ENCODE measurements at regions of chr5 and their contacts with region 1.

Region 1: DNA sequence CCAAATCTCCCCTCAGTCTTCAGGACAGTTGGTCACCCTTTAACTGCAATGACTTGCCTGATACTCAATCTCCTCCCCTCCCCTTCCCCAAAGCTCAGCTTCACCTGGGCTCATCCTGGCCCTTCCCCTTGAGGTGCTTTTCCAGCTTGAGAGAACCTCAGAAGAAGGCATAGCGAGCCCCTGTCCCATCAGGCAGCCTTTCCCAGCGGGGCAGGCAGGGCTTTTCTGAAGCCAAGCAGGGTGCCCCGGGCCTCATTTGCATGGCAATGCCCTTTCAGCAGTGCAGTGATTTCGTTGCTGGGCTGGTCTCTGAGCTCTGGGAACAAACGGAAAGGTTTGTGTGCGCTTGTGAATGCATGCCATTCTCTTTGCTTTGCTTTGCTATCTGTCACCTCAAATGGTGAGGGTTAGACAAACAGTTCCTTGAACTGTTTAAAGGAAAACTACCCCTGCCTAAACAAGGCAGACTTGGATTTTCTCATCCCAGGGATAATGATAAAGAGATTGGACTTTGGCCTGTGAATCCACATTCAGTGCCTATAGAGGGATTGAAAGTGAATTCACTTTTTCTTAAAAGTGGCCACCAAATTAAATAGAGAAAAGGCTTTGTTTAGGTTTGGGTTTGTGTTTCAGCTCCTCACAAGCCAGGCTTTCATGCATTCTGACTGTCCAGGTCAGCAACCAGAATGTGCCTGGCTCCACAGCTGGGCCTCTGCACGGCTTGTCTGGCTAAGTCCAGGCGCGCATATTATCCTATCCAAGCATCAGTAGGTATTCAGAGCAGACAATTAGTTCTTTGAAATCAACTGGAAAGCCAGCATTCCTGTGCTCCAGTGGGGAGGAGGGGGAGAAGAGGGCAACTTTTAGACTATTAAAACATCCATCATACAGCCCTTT is 165.3 kb downstream of the ZNF608 start:
- DNase-seq: no peak
- ATAC-seq: peak; percentile 88
- H3K4me3 ChIP-seq: no peak overlapping the region
- H3K27ac ChIP-seq: peak overlapping the region; percentile 75
- H3K4me1 ChIP-seq: peaks cover 24% of the 10 kb centered on the region
- H3K27me3 ChIP-seq: no peaks in the 10 kb centered on the region
- CTCF ChIP-seq: no peak

Region 2: DNA sequence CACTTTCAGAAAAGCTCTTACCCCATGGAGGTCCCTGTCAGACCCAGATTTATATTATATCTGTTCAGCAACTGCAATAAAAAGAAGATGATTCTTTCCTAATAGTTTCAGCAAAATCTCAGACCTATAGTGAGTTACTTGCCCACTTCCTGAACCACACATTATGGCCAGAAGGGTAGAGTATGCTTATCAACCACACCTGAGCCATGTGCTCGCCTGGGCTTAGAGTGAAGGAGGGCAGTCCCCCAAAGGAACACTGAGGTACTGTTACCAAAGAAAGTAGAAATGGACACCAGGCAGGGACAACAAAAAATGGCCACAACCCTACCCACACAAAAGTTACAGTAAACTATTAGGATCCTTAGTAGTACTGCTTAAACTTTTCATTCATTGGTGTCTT is 36.6 kb after region 1 on chr5:
- CTCF ChIA-PET with region 1: no interaction called
- POLR2A ChIA-PET with region 1: no interaction called
- in situ Hi-C with region 1: no loop called
- intact Hi-C with region 1: no loop called
- DNase-seq: no peak
- ATAC-seq: no peak
- H3K4me3 ChIP-seq: no peak overlapping the region
- H3K27ac ChIP-seq: peak overlapping the region; percentile 70
- H3K4me1 ChIP-seq: no peaks in the 10 kb centered on the region; the same call in 1 of the 2 replicates
- H3K27me3 ChIP-seq: no peaks in the 10 kb centered on the region
- CTCF ChIP-seq: no peak

Region 3: DNA sequence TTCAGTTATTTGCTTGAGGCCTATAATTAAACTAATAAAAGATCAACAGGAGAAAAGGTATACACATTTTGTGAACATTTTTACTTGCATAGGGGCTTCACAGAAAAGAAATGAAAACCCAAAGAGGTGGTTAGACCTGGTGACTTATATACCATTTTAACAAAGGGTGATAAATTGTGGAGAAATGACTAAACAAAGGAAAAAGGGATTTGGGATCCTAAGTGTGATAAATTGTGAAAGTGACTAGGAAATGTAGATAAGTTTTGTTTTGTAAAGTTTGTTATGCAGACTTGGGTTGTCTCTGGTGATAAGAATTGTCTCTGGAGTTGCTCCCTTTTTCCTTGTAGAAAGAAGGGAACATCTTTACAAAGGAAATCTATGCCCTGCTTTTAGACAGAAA is 251.3 kb after region 1 on chr5:
- CTCF ChIA-PET with region 1: interaction called, 12 read pairs
- POLR2A ChIA-PET with region 1: no interaction called
- in situ Hi-C with region 1: no loop called
- intact Hi-C with region 1: no loop called
- DNase-seq: no peak
- ATAC-seq: no peak
- H3K4me3 ChIP-seq: no peak overlapping the region
- H3K27ac ChIP-seq: no peak overlapping the region
- H3K4me1 ChIP-seq: no peaks in the 10 kb centered on the region
- H3K27me3 ChIP-seq: no peaks in the 10 kb centered on the region
- CTCF ChIP-seq: no peak

Region 4: DNA sequence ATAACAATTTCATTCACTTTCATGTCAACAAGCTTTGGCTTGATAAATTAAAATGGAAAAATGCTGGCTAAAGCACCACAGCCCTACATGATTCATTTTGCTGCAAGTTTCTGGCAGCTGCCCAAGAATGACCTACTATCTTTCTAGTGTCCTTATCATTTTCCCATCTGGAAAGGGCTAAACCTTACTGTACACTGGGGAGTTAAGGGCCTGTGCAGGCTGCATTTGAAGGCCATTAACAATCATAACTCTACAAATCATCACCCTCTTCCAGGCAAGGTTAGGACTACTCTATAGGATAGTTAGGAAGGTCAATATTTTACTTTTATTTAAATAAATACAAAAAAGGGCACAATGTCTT is 745.0 kb after region 1 on chr5:
- CTCF ChIA-PET with region 1: no interaction called
- POLR2A ChIA-PET with region 1: no interaction called
- in situ Hi-C with region 1: no loop called
- intact Hi-C with region 1: no loop called
- DNase-seq: no peak
- ATAC-seq: peak; percentile 62; the same call in 1 of the 2 replicates
- H3K4me3 ChIP-seq: no peak overlapping the region
- H3K27ac ChIP-seq: no peak overlapping the region; the same call in 1 of the 2 replicates
- H3K4me1 ChIP-seq: peaks cover 12% of the 10 kb centered on the region; the same call in 1 of the 2 replicates
- H3K27me3 ChIP-seq: no peaks in the 10 kb centered on the region
- CTCF ChIP-seq: no peak